Right ventricle myocardium superior (tissue), 1 donor: ENCODE measurements at regions of chr4 and their contacts with region 1.

Region 1: GRCh38 chr4:99405433-99406115 is 29.6 kb downstream of the ADH7 start:
- DNase-seq: peak; percentile 40
- ATAC-seq: peak; percentile 89

Region 2: GRCh38 chr4:98939892-98940298 is 465.7 kb before region 1 on chr4:
- intact Hi-C with region 1: loop called (anchors 5 kb)
- DNase-seq: no peak
- ATAC-seq: peak; percentile 72

Region 3: GRCh38 chr4:99117876-99118693 is 287.5 kb before region 1 on chr4:
- intact Hi-C with region 1: loop called (anchors 2 kb)
- DNase-seq: no peak
- ATAC-seq: peak; percentile 39

Region 4: DNA sequence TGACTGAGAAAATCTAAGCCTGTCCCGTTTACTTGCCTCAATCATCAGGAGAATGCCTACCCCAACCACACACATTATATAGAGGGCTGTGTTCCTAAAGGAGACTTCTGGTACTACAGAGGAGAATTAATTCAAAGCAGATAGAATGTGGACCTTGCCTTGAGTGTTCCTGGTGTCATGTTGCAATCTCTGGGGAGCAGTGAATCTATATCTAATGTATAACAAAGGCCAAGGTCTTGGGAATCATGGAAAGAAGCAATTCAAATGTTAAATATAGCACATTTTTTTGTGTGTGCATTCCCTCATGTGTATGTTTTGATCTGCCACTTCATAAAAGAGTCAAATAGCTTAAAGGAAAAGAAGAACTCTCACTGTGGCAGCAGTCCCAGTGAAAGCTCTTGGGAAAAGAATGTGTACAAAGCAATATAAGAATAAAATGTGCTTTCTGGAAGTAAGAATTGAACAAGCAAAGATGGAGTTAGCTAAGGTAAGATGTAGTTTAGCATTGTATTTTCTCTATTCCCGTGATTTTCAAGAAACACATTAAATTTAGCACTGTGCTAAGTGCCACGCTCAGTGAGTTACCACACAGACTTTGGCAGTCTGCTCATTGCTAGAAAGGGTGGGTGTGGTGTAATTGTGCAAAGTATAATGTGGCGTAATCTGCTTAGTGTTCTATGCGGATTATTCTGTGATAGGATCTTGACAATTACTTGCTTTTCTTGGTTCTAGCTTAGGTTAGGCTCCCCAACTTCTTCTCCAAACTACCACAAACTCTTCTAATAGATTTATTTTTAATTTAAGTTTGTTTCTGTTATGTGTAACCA is 200.2 kb before region 1 on chr4:
- intact Hi-C with region 1: loop called (anchors 10 kb)
- DNase-seq: no peak
- ATAC-seq: peak; percentile 74

Region 5: DNA sequence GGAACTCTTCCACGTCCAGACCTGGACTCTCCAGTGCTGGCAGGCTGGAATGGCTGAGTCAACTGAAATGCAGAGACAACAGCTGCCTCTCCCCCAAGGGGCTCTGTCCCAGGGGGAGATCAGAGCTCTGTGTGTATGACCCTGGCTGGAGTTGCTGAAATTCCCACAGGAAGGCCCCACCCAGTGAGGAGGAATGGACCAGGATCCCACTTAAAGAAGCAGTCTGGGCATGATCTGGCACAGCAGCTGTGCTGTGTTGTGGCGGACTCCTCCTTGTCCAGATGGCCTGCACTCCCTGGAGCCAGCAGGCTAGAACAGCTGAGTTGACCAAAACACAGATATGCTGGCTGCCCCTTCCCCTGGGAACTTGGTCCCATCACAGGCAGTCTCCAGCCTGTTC is 130.7 kb after region 1 on chr4:
- intact Hi-C with region 1: no loop called
- DNase-seq: no peak
- ATAC-seq: peak; percentile 48